WTC11 (cell line): ENCODE measurements at regions of chr19 and their contacts with region 1.

Region 1: DNA sequence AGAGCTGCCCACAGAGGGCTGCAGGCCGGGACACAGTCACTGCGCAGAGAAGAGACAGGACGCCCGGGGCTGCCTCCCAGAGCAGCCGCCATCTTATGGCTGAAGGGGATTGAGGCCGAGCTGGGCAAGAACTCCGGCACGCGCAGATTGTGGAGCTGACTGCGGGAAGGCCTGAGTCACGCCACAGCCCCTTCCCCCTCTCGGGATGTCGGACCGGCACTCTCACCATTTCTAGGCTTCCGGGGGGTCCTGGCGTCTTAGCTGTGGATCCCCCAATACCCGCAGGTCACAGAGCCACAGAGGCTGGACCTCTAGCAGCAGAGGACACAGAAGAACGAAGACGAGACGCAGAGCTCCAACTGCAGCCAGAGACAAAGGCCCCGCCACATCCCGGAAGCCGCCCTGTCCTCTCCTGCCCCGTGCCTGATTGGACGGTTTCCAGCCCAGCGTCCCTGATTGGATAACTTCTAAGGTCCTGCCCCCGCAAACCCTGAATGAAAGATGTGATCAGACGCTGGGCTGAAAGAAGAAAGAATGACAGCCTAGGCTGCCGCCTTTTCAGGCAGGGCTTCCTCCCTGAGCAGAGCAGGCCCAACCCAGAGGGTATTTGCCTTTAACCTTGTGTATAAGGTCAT is at the start of gene ZNF43:
- DNase-seq: peak; percentile 92
- ATAC-seq: peak; percentile 97
- H3K4me3 Mint-ChIP-seq: peak within 1 kb of the TSS; percentile 99
- H3K27ac Mint-ChIP-seq: peak within 1 kb of the TSS; percentile 100
- H3K4me1 Mint-ChIP-seq: peaks cover 13% of the 10 kb centered on the region
- H3K27me3 Mint-ChIP-seq: no peaks in the 10 kb centered on the region; the same call in 1 of the 2 replicates
- CTCF ChIP-seq: no peak
- total RNA-seq, gene ZNF43: 37.9 to 55.2 TPM (median 38.5 TPM) in 3 replicates

Region 2: GRCh38 chr19:21626924-21627697 is 208.8 kb before region 1 on chr19:
- CTCF ChIA-PET with region 1: no interaction called
- POLR2A ChIA-PET with region 1: no interaction called
- DNase-seq: no peak
- ATAC-seq: no peak
- H3K4me3 Mint-ChIP-seq: no peak overlapping the region
- H3K27ac Mint-ChIP-seq: no peak overlapping the region
- H3K4me1 Mint-ChIP-seq: peaks cover 17% of the 10 kb centered on the region; the same call in 1 of the 2 replicates
- H3K27me3 Mint-ChIP-seq: peaks cover 3% of the 10 kb centered on the region; the same call in 1 of the 2 replicates
- CTCF ChIP-seq: no peak

Region 3: GRCh38 chr19:21767065-21767800 is 68.7 kb before region 1 on chr19 and contains the start of gene ZNF100:
- CTCF ChIA-PET with region 1: interaction called, 3 read pairs
- POLR2A ChIA-PET with region 1: interaction called, 25 read pairs
- DNase-seq: peak; percentile 89
- ATAC-seq: peak; percentile 99
- H3K4me3 Mint-ChIP-seq: peak within 1 kb of the TSS; percentile 98
- H3K27ac Mint-ChIP-seq: peak within 1 kb of the TSS; percentile 97
- H3K4me1 Mint-ChIP-seq: peaks cover 10% of the 10 kb centered on the region
- H3K27me3 Mint-ChIP-seq: no peaks in the 10 kb centered on the region
- CTCF ChIP-seq: no peak
- total RNA-seq, gene ZNF100: 21.9 to 24.3 TPM (median 23.6 TPM) in 3 replicates

Region 4: GRCh38 chr19:21851596-21852345 is 15.8 kb after region 1 on chr19:
- CTCF ChIA-PET with region 1: interaction called, 13 read pairs
- POLR2A ChIA-PET with region 1: interaction called, 68 read pairs
- DNase-seq: peak; percentile 95
- ATAC-seq: peak; percentile 98
- H3K4me3 Mint-ChIP-seq: peak overlapping the region; percentile 89
- H3K27ac Mint-ChIP-seq: peak overlapping the region; percentile 93; the same call in 1 of the 2 replicates
- H3K4me1 Mint-ChIP-seq: peaks cover 23% of the 10 kb centered on the region
- H3K27me3 Mint-ChIP-seq: peaks cover 21% of the 10 kb centered on the region
- CTCF ChIP-seq: no peak

Region 5: GRCh38 chr19:21922256-21922655 is 86.3 kb after region 1 on chr19:
- CTCF ChIA-PET with region 1: no interaction called
- POLR2A ChIA-PET with region 1: no interaction called
- DNase-seq: no peak
- ATAC-seq: no peak
- H3K4me3 Mint-ChIP-seq: no peak overlapping the region
- H3K27ac Mint-ChIP-seq: no peak overlapping the region
- H3K4me1 Mint-ChIP-seq: no peaks in the 10 kb centered on the region
- H3K27me3 Mint-ChIP-seq: peaks cover 7% of the 10 kb centered on the region
- CTCF ChIP-seq: no peak